ENCODE measurements at regions of chr12 and their contacts with region 1.

Region 1: DNA sequence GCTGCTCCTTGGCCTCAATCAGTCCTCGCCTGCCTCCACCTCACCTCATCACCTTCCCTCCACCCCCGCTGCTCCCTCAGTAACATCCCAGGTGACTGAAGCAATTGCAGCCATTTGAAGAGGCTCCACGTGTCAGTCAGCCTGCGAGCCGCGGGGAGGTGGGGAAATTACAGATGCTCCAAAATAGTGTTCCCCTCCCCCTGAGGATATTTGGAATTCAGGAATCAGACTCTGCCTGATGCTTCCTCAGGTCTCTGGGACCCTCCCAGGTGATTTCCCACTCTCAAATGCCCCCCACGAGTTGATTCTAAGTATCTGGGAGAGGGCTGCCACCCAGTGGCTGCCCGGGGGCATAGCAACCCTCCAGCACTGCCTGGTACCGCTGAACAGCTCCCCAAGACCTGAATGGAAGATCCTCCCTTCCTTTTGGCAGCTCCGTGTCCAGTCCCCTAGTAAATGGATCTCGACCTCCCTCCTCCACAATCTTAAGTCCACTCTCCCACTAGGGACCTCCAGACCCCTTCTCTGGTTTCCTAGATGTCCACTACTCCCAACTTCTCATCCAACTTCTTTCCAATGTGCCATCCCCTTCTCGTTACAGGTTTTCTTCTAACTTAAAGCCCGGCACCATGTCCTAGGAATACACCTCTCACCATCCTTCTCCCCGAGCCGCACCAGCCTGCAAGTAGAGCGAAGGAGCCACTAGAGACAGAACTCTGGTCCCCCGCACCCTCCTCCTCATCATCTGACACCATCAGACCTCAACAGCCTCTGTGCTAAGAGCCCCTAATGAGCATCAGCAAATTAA is 1.4 kb upstream of the ASIC1 start:
- DNase-seq: peak; percentile 79
- ATAC-seq: peak; percentile 43
- H3K4me3 Mint-ChIP-seq: peak overlapping the region; percentile 85
- H3K27ac Mint-ChIP-seq: peak overlapping the region; percentile 32
- H3K4me1 Mint-ChIP-seq: peaks cover 33% of the 10 kb centered on the region
- H3K27me3 Mint-ChIP-seq: peaks cover 39% of the 10 kb centered on the region

Region 2: DNA sequence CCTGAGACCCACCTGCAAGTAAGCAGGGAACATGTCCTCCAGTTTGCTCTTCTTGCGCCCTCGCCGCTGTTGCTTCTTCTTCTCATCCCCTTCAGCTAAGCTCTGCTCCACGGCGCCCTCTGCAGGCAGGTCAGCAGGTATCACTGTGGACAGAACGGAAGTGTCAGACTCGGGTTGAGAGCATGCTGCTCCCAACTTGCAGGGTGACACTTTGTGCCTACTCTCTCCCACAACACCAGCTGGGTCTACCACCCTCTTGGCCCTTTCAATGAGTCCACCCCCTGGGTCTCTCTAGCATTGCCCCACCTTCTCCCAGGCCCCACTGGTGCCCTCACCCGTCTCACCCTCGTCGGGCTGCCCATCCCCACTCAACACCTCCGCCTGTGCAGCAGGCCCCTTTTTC is 1012.2 kb before region 1 on chr12:
- CTCF ChIA-PET with region 1: no interaction called
- POLR2A ChIA-PET with region 1: no interaction called
- intact Hi-C with region 1: no loop called
- DNase-seq: peak; percentile 91
- ATAC-seq: peak; percentile 91
- H3K4me3 Mint-ChIP-seq: no peak overlapping the region
- H3K27ac Mint-ChIP-seq: no peak overlapping the region
- H3K4me1 Mint-ChIP-seq: peaks cover 2% of the 10 kb centered on the region
- H3K27me3 Mint-ChIP-seq: no peaks in the 10 kb centered on the region

Region 3: GRCh38 chr12:49821373-49822287 is 234.4 kb before region 1 on chr12:
- CTCF ChIA-PET with region 1: no interaction called
- POLR2A ChIA-PET with region 1: no interaction called
- intact Hi-C with region 1: no loop called
- DNase-seq: no peak
- ATAC-seq: peak; percentile 40
- H3K4me3 Mint-ChIP-seq: no peak overlapping the region
- H3K27ac Mint-ChIP-seq: peak overlapping the region; percentile 77
- H3K4me1 Mint-ChIP-seq: peaks cover 28% of the 10 kb centered on the region
- H3K27me3 Mint-ChIP-seq: no peaks in the 10 kb centered on the region

Region 4: GRCh38 chr12:49866859-49867579 is 189.0 kb before region 1 on chr12:
- CTCF ChIA-PET with region 1: no interaction called
- POLR2A ChIA-PET with region 1: no interaction called
- intact Hi-C with region 1: loop called (anchors 2 to 10 kb)
- DNase-seq: peak; percentile 86
- ATAC-seq: peak; percentile 93
- H3K4me3 Mint-ChIP-seq: no peak overlapping the region
- H3K27ac Mint-ChIP-seq: no peak overlapping the region
- H3K4me1 Mint-ChIP-seq: no peaks in the 10 kb centered on the region
- H3K27me3 Mint-ChIP-seq: no peaks in the 10 kb centered on the region

Region 5: GRCh38 chr12:50025187-50026059 is 30.6 kb before region 1 on chr12 and contains the start of gene RACGAP1:
- CTCF ChIA-PET with region 1: interaction called, 9 read pairs
- POLR2A ChIA-PET with region 1: interaction called, 5 read pairs
- intact Hi-C with region 1: loop called in 1 of 2 experiments (anchors 1 kb)
- DNase-seq: peak; percentile 97
- ATAC-seq: peak; percentile 98
- H3K4me3 Mint-ChIP-seq: peak within 1 kb of the TSS; percentile 90
- H3K27ac Mint-ChIP-seq: peak within 1 kb of the TSS; percentile 95
- H3K4me1 Mint-ChIP-seq: peaks cover 23% of the 10 kb centered on the region
- H3K27me3 Mint-ChIP-seq: no peaks in the 10 kb centered on the region
- total RNA-seq, gene RACGAP1: 99.7 to 118 TPM

Region 6: DNA sequence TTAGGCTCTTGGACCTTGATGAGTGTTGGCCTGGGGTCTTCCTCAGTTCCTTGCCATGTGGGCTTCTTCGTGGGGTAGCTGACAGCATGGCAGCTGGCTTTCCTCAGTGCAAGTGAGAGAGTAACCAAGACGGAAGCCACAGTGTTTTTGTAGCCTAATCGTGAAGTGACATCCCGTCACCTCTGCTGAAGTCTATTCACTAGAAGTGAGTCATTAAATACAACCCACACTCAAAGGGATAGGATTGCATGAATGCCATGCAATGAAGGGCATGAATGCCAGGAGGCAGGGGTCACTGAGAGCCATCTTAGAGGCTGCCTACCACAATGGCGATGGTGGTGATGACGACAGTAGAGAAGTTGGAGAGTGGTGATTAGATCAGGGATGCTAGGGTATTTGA is 12.2 kb before region 1 on chr12:
- CTCF ChIA-PET with region 1: interaction called, 135 read pairs
- POLR2A ChIA-PET with region 1: interaction called, 4 read pairs
- intact Hi-C with region 1: loop called (anchors 1 kb)
- DNase-seq: peak; percentile 20
- ATAC-seq: peak; percentile 63
- H3K4me3 Mint-ChIP-seq: no peak overlapping the region
- H3K27ac Mint-ChIP-seq: peak overlapping the region; percentile 14
- H3K4me1 Mint-ChIP-seq: peaks cover 27% of the 10 kb centered on the region
- H3K27me3 Mint-ChIP-seq: peaks cover 5% of the 10 kb centered on the region

Region 7: DNA sequence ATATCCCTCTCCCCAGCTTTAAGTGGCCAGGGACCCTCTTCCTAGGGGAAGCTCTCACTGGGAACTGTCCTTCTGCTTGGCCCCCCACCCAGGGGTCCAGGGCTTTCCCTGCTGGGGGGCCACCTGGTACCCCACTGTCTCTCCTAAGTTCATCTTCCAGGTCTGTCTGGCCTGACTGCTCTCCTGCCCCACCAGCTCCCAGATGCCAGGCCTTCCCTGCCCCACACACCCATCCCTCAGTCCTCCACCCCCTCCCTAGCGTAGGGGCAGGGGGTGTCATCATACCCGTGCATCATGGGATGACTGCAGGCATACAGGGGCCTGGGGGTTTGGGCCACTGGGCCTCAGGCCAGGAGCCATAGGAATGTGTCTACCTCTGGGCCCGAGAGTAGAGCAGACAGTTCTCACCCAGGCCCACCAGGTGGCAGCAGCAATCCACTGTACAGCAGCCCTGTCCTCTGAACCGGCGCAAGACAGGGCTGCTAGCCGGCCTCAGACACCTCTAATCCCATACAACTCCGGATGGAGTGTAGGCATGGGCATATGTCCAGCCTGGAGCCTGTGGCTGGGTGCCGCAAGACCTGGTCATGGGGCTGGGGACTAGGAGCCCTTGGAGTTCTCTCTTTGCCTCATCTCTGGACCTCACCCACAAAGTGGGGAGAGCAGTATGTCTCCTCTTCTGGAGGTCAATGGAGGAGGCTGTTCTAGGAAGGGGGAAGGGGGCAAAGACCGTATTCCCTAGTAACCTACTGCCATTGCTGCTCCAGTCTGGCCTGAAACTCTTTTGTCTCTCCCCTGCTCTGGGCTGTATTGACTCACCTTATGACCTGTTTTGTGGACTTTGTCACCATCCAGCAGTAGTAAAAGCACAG is 19.1 kb after region 1 on chr12:
- CTCF ChIA-PET with region 1: interaction called, 24 read pairs
- POLR2A ChIA-PET with region 1: no interaction called
- intact Hi-C with region 1: no loop called
- DNase-seq: peak; percentile 90
- ATAC-seq: peak; percentile 98
- H3K4me3 Mint-ChIP-seq: no peak overlapping the region
- H3K27ac Mint-ChIP-seq: no peak overlapping the region
- H3K4me1 Mint-ChIP-seq: peaks cover 8% of the 10 kb centered on the region
- H3K27me3 Mint-ChIP-seq: no peaks in the 10 kb centered on the region

Region 8: DNA sequence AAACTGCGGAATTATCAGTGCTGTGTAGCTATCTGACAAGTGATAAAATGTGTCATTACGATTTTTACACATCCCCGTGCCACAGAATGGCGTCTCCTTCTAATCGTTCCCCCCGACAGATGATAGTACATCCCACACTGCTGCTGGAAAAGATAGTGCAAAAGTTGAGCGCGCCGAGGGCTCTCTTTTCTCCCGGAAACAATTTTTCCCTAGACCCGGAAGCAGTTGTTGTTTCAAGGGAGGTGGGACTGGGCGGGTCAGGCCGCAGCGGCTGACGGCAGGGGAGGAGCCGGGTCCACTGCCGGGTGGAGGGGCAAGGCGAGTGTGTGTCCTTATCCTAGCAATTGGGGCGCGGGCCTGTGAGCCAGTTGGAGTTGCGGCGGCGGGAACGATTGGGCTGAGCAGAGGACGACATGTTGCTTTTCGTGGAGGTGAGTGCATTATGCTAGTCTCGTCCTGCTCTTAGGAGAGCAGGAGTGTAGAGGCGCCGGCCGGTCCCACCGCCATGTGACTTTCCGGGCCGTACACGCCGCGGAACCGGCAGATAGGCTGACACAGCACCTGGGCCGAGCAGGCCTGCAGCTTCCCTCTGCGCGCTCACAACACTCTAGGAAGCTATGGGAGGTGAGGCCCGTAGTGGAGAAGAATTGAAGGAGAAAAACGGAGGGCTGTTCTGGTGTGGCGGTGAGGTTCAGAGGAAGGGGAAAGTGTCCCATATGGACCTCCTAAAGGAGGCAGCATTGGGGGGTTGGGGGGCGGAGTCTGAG is 344.7 kb after region 1 on chr12 and contains the start of gene LARP4:
- CTCF ChIA-PET with region 1: no interaction called
- POLR2A ChIA-PET with region 1: no interaction called
- intact Hi-C with region 1: no loop called
- DNase-seq: peak; percentile 95
- ATAC-seq: peak; percentile 97
- H3K4me3 Mint-ChIP-seq: peak within 1 kb of the TSS; percentile 93
- H3K27ac Mint-ChIP-seq: peak within 1 kb of the TSS; percentile 94
- H3K4me1 Mint-ChIP-seq: peaks cover 13% of the 10 kb centered on the region
- H3K27me3 Mint-ChIP-seq: no peaks in the 10 kb centered on the region
- total RNA-seq, gene LARP4: 66.3 to 72.4 TPM

Region 9: GRCh38 chr12:50734409-50735263 is 678.6 kb after region 1 on chr12:
- CTCF ChIA-PET with region 1: no interaction called
- POLR2A ChIA-PET with region 1: no interaction called
- intact Hi-C with region 1: no loop called
- DNase-seq: peak; percentile 34
- ATAC-seq: peak; percentile 51
- H3K4me3 Mint-ChIP-seq: no peak overlapping the region
- H3K27ac Mint-ChIP-seq: no peak overlapping the region
- H3K4me1 Mint-ChIP-seq: no peaks in the 10 kb centered on the region
- H3K27me3 Mint-ChIP-seq: no peaks in the 10 kb centered on the region